ENCODE measurements at regions of chr3 and their contacts with region 1.

Region 1: DNA sequence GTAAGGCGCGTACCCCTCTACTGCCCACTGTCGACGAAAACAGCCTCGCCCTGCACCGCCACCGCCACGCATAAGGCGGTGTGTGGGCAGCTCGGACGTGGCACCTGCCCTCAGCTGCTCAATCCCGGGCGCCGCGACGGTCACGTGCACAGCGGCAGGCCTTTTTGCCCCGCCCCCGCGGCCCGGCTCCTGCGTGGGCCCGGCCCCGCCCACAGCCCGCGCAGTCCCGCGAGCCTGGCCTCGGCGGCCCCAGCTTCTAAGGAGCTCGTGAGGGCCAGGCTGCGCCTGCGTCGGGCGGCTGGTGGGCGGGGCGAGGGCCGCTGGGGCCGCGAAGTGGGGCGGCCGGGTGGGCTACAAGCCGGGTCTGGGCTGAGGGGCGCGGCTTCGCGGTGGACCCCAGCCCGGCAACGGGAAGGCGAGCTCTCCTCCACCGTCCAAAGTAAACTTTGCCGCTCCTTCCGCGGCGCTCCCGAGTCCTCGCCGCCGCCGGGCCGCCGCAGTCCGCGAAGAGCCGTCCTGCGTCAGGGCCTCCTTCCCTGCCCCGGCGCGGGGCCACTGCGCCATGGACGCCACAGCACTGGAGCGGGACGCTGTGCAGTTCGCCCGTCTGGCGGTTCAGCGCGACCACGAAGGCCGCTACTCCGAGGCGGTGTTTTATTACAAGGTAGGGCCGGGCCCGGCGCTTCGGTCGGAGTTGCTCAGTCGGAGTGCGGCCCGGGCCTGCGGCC is at the start of gene CAPN7:
- DNase-seq: peak; percentile 85
- ATAC-seq: peak; percentile 93
- H3K4me3 ChIP-seq: peak within 1 kb of the TSS; percentile 84 to 92
- H3K27ac ChIP-seq: peak within 1 kb of the TSS; percentile 75
- H3K4me1 ChIP-seq: peaks cover 6 to 18% of the 10 kb centered on the region in 2 experiments; a peak in 3 of 4 replicates
- H3K27me3 ChIP-seq: no peaks in the 10 kb centered on the region
- CTCF ChIP-seq: peak in 2 of 3 experiments; percentile 36 to 50; a peak in 3 of 6 replicates
- POLR2A ChIP-seq: peak; percentile 74
- RAD21 ChIP-seq: no peak
- total RNA-seq, gene CAPN7: 27.7 TPM

Region 2: GRCh38 chr3:15108082-15108545 is 98.0 kb before region 1 on chr3:
- CTCF ChIA-PET with region 1: interaction called, 3 read pairs
- POLR2A ChIA-PET with region 1: no interaction called
- RAD21 ChIA-PET with region 1: interaction called in 1 of 2 experiments, 3 read pairs
- intact Hi-C with region 1: loop called (anchors 5 kb)
- DNase-seq: peak; percentile 65
- ATAC-seq: peak; percentile 98
- H3K4me3 ChIP-seq: no peak overlapping the region
- H3K27ac ChIP-seq: no peak overlapping the region
- H3K4me1 ChIP-seq: peaks cover 0 to 5% of the 10 kb centered on the region in 2 experiments; a peak in 1 of 4 replicates
- H3K27me3 ChIP-seq: no peaks in the 10 kb centered on the region
- CTCF ChIP-seq: peak; percentile 67 to 97 (median 95)
- POLR2A ChIP-seq: no peak
- RAD21 ChIP-seq: peak; percentile 90

Region 3: GRCh38 chr3:15399970-15400369 is 193.9 kb after region 1 on chr3:
- CTCF ChIA-PET with region 1: interaction called, 43 read pairs
- POLR2A ChIA-PET with region 1: no interaction called
- RAD21 ChIA-PET with region 1: interaction called, 4 read pairs
- intact Hi-C with region 1: loop called (anchors 2 kb)
- DNase-seq: no peak
- ATAC-seq: no peak
- H3K4me3 ChIP-seq: no peak overlapping the region
- H3K27ac ChIP-seq: no peak overlapping the region
- H3K4me1 ChIP-seq: peaks cover 0 to 5% of the 10 kb centered on the region in 2 experiments; a peak in 1 of 4 replicates
- H3K27me3 ChIP-seq: no peaks in the 10 kb centered on the region
- CTCF ChIP-seq: no peak
- POLR2A ChIP-seq: no peak
- RAD21 ChIP-seq: no peak

Region 4: GRCh38 chr3:15557511-15557946 is 351.4 kb after region 1 on chr3:
- CTCF ChIA-PET with region 1: no interaction called
- POLR2A ChIA-PET with region 1: no interaction called
- RAD21 ChIA-PET with region 1: no interaction called
- intact Hi-C with region 1: loop called (anchors 5 kb)
- DNase-seq: peak; percentile 82
- ATAC-seq: peak; percentile 100
- H3K4me3 ChIP-seq: no peak overlapping the region
- H3K27ac ChIP-seq: peak overlapping the region; percentile 21; the same call in 1 of the 2 replicates
- H3K4me1 ChIP-seq: peaks cover 4 to 6% of the 10 kb centered on the region in 2 experiments; a peak in 3 of 4 replicates
- H3K27me3 ChIP-seq: no peaks in the 10 kb centered on the region
- CTCF ChIP-seq: peak; percentile 47 to 71 (median 62); a peak in 4 of 6 replicates
- POLR2A ChIP-seq: no peak
- RAD21 ChIP-seq: peak; percentile 67

Region 5: GRCh38 chr3:16183601-16184270 is 977.6 kb after region 1 on chr3:
- CTCF ChIA-PET with region 1: no interaction called
- POLR2A ChIA-PET with region 1: no interaction called
- RAD21 ChIA-PET with region 1: no interaction called
- intact Hi-C with region 1: loop called (anchors 10 kb)
- DNase-seq: no peak
- ATAC-seq: no peak
- H3K4me3 ChIP-seq: no peak overlapping the region
- H3K27ac ChIP-seq: no peak overlapping the region
- H3K4me1 ChIP-seq: peaks cover 0 to 1% of the 10 kb centered on the region in 2 experiments; a peak in 1 of 4 replicates
- H3K27me3 ChIP-seq: no peaks in the 10 kb centered on the region
- CTCF ChIP-seq: no peak
- POLR2A ChIP-seq: no peak
- RAD21 ChIP-seq: no peak